Mammary epithelial cell (primary cell): ENCODE measurements at regions of chr9 and their contacts with region 1.

Region 1: DNA sequence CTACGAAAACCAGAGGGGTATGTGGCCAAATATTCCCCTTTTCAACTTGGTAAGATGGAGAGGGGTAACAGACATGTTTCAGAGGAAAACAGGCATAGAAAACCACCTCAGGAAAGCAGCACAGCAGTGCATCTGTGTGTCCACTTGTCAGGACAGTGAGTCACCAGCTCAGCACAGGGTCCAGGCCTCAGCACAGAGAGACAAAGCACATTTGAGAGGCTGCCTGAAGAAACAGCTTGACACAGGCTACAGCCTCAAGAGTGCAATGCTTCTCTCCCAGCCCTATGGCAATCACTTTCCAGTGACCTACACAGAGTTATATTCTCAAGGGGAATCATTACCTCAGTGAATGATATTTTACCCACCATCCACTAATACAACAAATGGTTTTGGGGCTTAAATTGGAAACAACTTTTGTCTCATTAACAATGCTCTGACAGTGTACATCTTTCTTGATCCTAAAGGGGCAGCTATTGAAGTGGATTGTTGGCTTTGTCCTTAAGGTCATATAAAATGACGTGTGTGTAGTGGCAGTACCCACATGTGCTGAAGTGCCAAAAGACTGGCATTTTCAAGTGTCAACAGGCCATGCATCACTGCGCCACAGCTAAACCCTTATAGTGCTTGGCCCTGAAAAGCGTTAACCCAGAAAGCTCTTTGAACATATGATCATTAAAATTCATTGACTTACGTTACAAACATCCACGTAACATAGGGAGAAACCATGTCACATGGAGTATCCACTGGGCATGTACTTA is 46.4 kb downstream of the ERMP1 start:
- DNase-seq: no peak
- H3K4me3 ChIP-seq: no peak overlapping the region
- H3K27ac ChIP-seq: no peak overlapping the region
- H3K4me1 ChIP-seq: no peaks in the 10 kb centered on the region
- H3K27me3 ChIP-seq: no peaks in the 10 kb centered on the region
- CTCF ChIP-seq: no peak

Region 2: DNA sequence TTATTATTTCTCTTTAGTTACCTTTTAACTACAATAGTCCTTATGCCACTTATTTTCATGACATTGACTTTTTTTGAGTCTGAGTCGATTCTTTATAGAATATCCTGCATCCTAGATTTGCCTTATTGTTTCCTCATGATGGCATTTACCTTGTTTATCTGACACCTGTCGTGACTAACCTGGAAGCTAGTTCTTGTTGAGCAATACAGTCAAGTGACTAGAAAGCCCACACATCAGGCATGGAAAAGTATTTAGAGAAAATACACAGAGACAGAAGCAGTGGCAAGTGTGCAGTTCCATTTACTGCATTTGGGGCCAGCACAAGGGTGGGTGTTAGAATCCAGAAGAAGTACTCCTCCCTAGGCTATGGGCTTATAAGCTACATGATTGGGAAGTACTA is 51.5 kb before region 1 on chr9:
- CTCF ChIA-PET with region 1: no interaction called
- dilution Hi-C with region 1: loop called (anchors 5 kb)
- in situ Hi-C with region 1: no loop called
- intact Hi-C with region 1: no loop called
- DNase-seq: no peak
- H3K4me3 ChIP-seq: no peak overlapping the region
- H3K27ac ChIP-seq: no peak overlapping the region
- H3K4me1 ChIP-seq: no peaks in the 10 kb centered on the region
- H3K27me3 ChIP-seq: no peaks in the 10 kb centered on the region
- CTCF ChIP-seq: no peak

Region 3: DNA sequence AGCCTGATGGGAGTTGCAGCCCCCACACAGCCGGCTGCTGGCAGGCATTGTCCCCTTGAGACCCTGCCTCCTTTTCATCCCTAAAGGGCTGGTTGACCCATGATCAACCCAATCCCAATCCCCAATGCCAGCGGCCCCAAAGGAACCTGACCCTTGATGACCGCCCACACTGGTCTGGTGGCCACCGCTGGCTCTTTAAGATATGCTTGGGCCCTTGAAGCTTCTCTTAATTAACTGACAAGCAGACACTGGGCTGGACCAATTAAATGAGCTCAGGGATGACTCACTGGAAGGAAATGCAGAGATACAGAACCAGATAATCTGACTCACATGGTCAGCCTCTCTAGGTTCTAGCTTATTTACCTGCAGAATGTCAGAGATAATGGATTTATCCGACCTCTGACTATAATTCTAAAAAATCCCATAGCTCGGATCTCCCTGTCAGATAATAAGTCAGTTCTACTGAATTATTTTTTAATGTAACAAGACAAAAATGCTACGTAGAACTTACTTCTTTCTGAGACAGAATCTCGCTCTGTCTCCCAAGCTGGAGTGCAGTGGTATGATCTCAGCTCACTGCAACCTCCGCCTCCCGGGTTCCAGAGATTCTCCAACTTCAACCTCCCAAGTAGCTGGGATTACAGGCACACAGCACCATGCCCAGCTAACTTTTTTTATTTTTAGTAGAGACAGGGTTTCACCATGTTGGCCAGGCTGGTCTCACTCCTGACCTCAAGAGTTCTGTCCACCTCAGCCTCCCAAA is 93.1 kb after region 1 on chr9:
- CTCF ChIA-PET with region 1: no interaction called
- dilution Hi-C with region 1: loop called (anchors 5 kb)
- in situ Hi-C with region 1: no loop called
- intact Hi-C with region 1: no loop called
- DNase-seq: peak; percentile 89
- H3K4me3 ChIP-seq: peak overlapping the region; percentile 28 to 54 (median 44)
- H3K27ac ChIP-seq: peak overlapping the region; percentile 49
- H3K4me1 ChIP-seq: peaks cover 17% of the 10 kb centered on the region
- H3K27me3 ChIP-seq: no peaks in the 10 kb centered on the region
- CTCF ChIP-seq: no peak